PC-9 (cell line): ENCODE measurements at regions of chr1 and their contacts with region 1.

Region 1: GRCh38 chr1:234114648-234115307 is 210.3 kb downstream of the SLC35F3 start:
- DNase-seq: peak; percentile 19 to 42
- H3K4me3 ChIP-seq: peak overlapping the region; percentile 37; the same call in 1 of the 2 replicates
- H3K27ac ChIP-seq: no peak overlapping the region
- H3K4me1 ChIP-seq: no peaks in the 10 kb centered on the region
- H3K27me3 ChIP-seq: no peaks in the 10 kb centered on the region
- CTCF ChIP-seq: peak; percentile 85

Region 2: GRCh38 chr1:233304489-233305102 is 810.2 kb before region 1 on chr1:
- CTCF ChIA-PET with region 1: interaction called, 3 read pairs
- POLR2A ChIA-PET with region 1: no interaction called
- intact Hi-C with region 1: loop called (anchors 1 kb)
- DNase-seq: no peak
- H3K4me3 ChIP-seq: no peak overlapping the region
- H3K27ac ChIP-seq: no peak overlapping the region
- H3K4me1 ChIP-seq: no peaks in the 10 kb centered on the region
- H3K27me3 ChIP-seq: no peaks in the 10 kb centered on the region
- CTCF ChIP-seq: peak; percentile 78

Region 3: DNA sequence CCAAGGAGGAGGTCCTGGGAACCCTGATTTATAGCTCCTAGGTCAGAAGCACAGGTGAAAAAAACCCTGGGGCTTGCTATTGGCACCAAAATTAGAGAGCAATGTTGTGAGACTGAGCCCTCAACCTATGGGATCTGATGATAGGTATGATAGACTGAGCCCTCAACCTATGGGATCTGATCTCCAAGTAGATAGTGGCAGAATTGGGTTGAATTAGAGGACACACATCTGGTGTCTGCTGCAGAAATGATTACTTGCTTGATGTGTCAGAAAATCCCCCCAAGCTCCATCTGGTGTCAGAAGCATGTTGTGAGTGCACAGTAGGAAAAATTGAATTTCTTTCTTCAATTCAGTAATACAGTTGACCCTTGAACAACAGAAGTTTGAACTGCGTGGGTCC is 724.9 kb before region 1 on chr1:
- CTCF ChIA-PET with region 1: interaction called, 19 read pairs
- POLR2A ChIA-PET with region 1: no interaction called
- intact Hi-C with region 1: loop called (anchors 1 kb)
- DNase-seq: no peak
- H3K4me3 ChIP-seq: no peak overlapping the region
- H3K27ac ChIP-seq: no peak overlapping the region
- H3K4me1 ChIP-seq: no peaks in the 10 kb centered on the region
- H3K27me3 ChIP-seq: no peaks in the 10 kb centered on the region
- CTCF ChIP-seq: no peak

Region 4: GRCh38 chr1:233440951-233441401 is 673.8 kb before region 1 on chr1:
- CTCF ChIA-PET with region 1: interaction called, 5 read pairs
- POLR2A ChIA-PET with region 1: no interaction called
- intact Hi-C with region 1: loop called (anchors 2 kb)
- DNase-seq: peak; percentile 47 to 72
- H3K4me3 ChIP-seq: no peak overlapping the region
- H3K27ac ChIP-seq: no peak overlapping the region
- H3K4me1 ChIP-seq: peaks cover 9% of the 10 kb centered on the region; the same call in 1 of the 2 replicates
- H3K27me3 ChIP-seq: no peaks in the 10 kb centered on the region
- CTCF ChIP-seq: peak; percentile 81

Region 5: GRCh38 chr1:234478481-234479309 is 363.9 kb after region 1 on chr1 and contains the start of gene TARBP1:
- CTCF ChIA-PET with region 1: no interaction called
- POLR2A ChIA-PET with region 1: no interaction called
- intact Hi-C with region 1: loop called (anchors 10 kb)
- DNase-seq: peak; percentile 44 to 73
- H3K4me3 ChIP-seq: peak within 1 kb of the TSS; percentile 74
- H3K27ac ChIP-seq: peak within 1 kb of the TSS; percentile 56
- H3K4me1 ChIP-seq: peaks cover 16% of the 10 kb centered on the region
- H3K27me3 ChIP-seq: no peaks in the 10 kb centered on the region
- CTCF ChIP-seq: no peak
- total RNA-seq, gene TARBP1: 47.3 and 61.1 TPM in 2 replicates

Region 6: DNA sequence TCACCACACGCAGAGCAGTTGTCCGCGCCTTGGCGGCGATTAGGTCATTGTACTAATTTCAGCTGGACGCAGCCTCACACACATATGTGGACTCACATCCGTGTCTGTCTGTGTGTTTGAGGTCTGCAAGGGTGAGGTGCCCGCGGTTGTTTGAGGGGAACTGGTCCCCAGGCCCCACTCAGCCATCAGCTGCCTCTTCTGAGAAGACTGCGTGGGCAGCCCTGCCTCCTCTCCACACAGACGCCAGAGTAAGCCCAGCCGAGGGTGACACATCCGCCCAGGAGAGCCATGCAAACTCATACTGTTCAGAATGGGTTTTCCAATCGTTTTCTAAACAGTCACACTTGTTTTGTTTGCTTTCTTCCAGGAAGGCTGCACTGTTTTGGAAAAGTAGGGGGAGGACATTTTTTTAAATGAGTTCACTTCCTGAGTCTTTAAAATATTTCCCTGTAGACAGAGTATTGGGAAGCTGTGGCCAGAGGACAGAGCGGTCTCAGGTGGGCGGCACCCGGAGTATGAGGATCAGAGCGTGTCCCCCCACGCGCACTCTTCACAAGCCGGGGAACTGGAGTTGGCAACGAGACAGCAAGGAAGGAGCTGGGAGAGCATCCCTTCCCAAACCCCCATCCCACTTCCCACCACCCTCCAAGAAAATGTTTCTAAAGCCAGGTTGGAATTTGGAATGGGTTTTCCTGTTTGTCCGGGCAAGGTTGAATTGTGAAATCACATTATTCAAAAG is 960.6 kb after region 1 on chr1:
- CTCF ChIA-PET with region 1: no interaction called
- POLR2A ChIA-PET with region 1: no interaction called
- intact Hi-C with region 1: loop called (anchors 5 kb)
- DNase-seq: peak; percentile 66 to 95
- H3K4me3 ChIP-seq: peak overlapping the region; percentile 61
- H3K27ac ChIP-seq: peak overlapping the region; percentile 100
- H3K4me1 ChIP-seq: peaks cover 94% of the 10 kb centered on the region
- H3K27me3 ChIP-seq: no peaks in the 10 kb centered on the region
- CTCF ChIP-seq: no peak